Aorta (tissue), 5 donors: ENCODE measurements at regions of chr3 and their contacts with region 1.

Region 1: DNA sequence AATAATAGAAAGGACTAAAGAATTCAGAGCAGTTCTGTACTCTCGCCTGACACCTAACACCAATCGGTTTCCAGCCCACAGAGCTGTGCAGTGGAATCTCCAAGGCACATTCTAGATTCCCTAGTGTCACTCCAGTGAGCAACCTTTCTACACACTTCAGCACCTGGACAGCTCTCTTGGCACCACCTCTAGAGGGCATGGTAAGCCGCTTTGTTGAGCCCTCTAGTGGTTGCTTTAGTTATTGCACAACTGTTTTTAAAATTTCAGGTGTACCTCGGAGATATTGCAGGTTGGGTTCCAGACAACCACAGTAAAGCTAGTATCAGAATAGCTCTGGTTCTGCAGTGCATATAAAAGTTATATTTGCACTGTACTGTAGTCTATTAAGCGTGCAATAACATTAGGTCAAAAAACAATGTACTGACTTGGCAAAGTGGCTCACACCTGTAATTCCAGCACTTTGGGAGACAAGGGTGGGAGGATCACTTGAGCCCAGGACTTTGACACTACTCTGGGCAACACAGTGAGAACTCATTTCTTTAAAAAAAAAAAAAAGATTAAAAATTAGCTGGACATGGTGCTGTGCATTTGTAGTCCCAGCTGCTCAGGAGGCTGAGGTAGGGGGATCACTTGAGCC is 26.5 kb upstream of the ERC2 start:
- DNase-seq: peak; percentile 78 to 83
- ATAC-seq: peak; percentile 79
- H3K4me3 ChIP-seq: no peak overlapping the region
- H3K27ac ChIP-seq: no peak overlapping the region
- H3K4me1 ChIP-seq: no peaks in the 10 kb centered on the region
- H3K27me3 ChIP-seq: no peaks in the 10 kb centered on the region

Region 2: GRCh38 chr3:56347219-56347871 is 147.5 kb before region 1 on chr3:
- intact Hi-C with region 1: loop called in 1 of 2 experiments (anchors 10 kb)
- DNase-seq: no peak
- ATAC-seq: no peak
- H3K4me3 ChIP-seq: no peak overlapping the region
- H3K27ac ChIP-seq: no peak overlapping the region
- H3K4me1 ChIP-seq: no peaks in the 10 kb centered on the region
- H3K27me3 ChIP-seq: no peaks in the 10 kb centered on the region

Region 3: DNA sequence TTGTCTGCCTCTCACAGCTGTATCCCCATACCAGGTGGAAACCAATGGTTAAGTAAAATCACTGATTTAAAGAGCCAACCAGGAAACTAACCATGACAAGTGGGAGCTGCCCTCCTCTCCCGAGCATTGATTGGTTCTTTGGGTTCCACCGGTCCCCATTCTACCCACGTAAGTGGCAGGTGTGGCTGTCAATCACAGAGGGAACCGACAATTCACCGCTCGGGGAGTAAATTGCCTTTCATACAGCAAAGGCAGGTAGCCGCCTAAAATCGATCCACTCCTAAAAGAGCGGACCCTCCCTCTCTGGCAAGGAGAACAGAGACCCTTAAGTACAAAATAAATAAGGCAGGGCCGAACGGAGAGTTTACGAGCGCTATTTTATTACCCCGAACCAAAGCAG is 27.7 kb before region 1 on chr3:
- intact Hi-C with region 1: no loop called
- DNase-seq: no peak
- ATAC-seq: peak; percentile 42
- H3K4me3 ChIP-seq: no peak overlapping the region
- H3K27ac ChIP-seq: no peak overlapping the region
- H3K4me1 ChIP-seq: no peaks in the 10 kb centered on the region
- H3K27me3 ChIP-seq: no peaks in the 10 kb centered on the region